Breast epithelium (tissue), 4 donors: ENCODE measurements at regions of chr7 and their contacts with region 1.

Region 1: GRCh38 chr7:147923841-147924240 is 666.7 kb upstream of the C7orf33 start:
- DNase-seq: no peak
- H3K4me3 ChIP-seq: no peak overlapping the region
- H3K27ac ChIP-seq: no peak overlapping the region
- H3K4me1 ChIP-seq: no peaks in the 10 kb centered on the region
- H3K27me3 ChIP-seq: no peaks in the 10 kb centered on the region
- CTCF ChIP-seq: no peak
- POLR2A ChIP-seq: no peak

Region 2: DNA sequence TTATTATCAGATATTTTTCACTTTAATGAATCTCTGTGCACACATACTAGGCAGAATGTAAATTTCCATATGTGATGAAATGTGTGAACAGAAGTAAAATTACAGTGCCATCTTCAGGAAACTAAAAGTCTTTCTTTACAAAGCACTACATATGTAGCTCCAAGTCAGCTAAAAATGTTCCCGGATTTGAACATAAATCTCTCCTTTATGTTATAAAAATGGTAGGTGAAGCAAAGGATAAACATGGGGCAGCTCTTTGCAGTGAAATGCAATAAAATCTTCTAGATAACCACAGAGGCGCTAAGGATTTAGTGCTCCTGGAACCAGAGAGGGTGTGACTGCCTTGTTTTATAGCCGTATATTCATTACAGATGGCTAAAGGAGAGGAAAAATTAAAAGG is 561.8 kb after region 1 on chr7:
- intact Hi-C with region 1: loop called (anchors 5 kb)
- DNase-seq: no peak
- H3K4me3 ChIP-seq: no peak overlapping the region
- H3K27ac ChIP-seq: no peak overlapping the region
- H3K4me1 ChIP-seq: no peaks in the 10 kb centered on the region
- H3K27me3 ChIP-seq: no peaks in the 10 kb centered on the region
- CTCF ChIP-seq: no peak
- POLR2A ChIP-seq: no peak